ENCODE measurements at regions of chr2 and their contacts with region 1.

Region 1: DNA sequence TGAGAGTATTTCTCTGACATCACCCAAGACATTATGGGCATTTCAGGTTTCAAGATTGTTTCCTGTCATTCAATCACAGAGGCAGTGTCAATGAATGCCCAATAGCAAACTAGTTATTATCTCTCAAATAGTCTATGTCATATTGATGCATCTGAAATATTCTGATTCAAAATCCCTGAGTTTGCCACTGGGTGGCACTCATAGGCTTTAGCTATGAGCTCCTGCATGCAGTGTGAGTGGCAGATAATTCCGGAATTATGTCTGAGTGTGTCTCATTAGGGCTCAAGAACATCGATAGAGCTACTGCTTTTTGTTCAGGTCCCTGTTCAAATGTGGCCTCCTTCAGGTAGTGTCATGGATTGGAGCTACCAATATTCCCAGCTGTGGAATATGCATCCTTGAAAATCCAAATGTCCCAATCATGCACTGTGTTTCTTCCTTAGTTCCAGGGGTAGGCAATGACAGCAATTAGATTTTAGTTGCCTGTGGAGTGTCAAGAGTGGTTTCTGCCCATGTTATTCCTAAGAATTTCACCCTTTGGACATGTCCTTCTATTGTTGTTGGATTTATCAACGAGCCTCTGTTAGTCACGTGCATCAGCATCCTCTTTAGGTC is 7.8 kb upstream of the OR6B3 start:
- DNase-seq: no peak
- ATAC-seq: peak; percentile 37 to 63 (median 44)
- H3K4me3 ChIP-seq: no peak overlapping the region
- H3K27ac ChIP-seq: no peak overlapping the region
- H3K4me1 ChIP-seq: no peaks in the 10 kb centered on the region
- H3K27me3 ChIP-seq: peaks cover 0 to 24% (median 5%) of the 10 kb centered on the region in 9 donors
- CTCF ChIP-seq: peak; percentile 37 to 70 (median 57)
- POLR2A ChIP-seq: no peak

Region 2: GRCh38 chr2:240136013-240136670 is 75.1 kb after region 1 on chr2 and contains the start of gene COPS9:
- intact Hi-C with region 1: loop called in 2 of 10 experiments (anchors 1 to 2 kb)
- DNase-seq: peak; percentile 86 to 94 (median 89)
- ATAC-seq: peak; percentile 90 to 99 (median 98)
- H3K4me3 ChIP-seq: peak within 1 kb of the TSS; percentile 70 to 99 (median 92)
- H3K27ac ChIP-seq: peak within 1 kb of the TSS; percentile 21 to 85 (median 72)
- H3K4me1 ChIP-seq: peaks cover 5 to 22% (median 10%) of the 10 kb centered on the region in 12 donors
- H3K27me3 ChIP-seq: no peaks in the 10 kb centered on the region
- CTCF ChIP-seq: peak in 1 of 12 donors; percentile 40
- POLR2A ChIP-seq: peak in 1 of 2 donors; percentile 48
- total RNA-seq, gene COPS9: 130 to 262 (median 166) TPM

Region 3: GRCh38 chr2:240143801-240144648 is 82.9 kb after region 1 on chr2:
- intact Hi-C with region 1: loop called (anchors 1 to 2 kb)
- DNase-seq: peak; percentile 50 to 83 (median 64)
- ATAC-seq: peak; percentile 28 to 81 (median 80)
- H3K4me3 ChIP-seq: no peak overlapping the region
- H3K27ac ChIP-seq: no peak overlapping the region
- H3K4me1 ChIP-seq: peaks cover 0 to 6% (median 0%) of the 10 kb centered on the region in 12 donors
- H3K27me3 ChIP-seq: peaks cover 0 to 20% (median 5%) of the 10 kb centered on the region in 9 donors
- CTCF ChIP-seq: peak; percentile 4 to 96 (median 93)
- POLR2A ChIP-seq: no peak